ENCODE measurements at regions of chr18 and their contacts with region 1.

Region 1: GRCh38 chr18:22983175-22983574 is 50.0 kb downstream of the RBBP8 start:
- DNase-seq: no peak
- H3K4me3 Mint-ChIP-seq: no peak overlapping the region
- H3K27ac Mint-ChIP-seq: no peak overlapping the region
- H3K4me1 Mint-ChIP-seq: peaks cover 11% of the 10 kb centered on the region
- H3K27me3 Mint-ChIP-seq: no peaks in the 10 kb centered on the region

Region 2: DNA sequence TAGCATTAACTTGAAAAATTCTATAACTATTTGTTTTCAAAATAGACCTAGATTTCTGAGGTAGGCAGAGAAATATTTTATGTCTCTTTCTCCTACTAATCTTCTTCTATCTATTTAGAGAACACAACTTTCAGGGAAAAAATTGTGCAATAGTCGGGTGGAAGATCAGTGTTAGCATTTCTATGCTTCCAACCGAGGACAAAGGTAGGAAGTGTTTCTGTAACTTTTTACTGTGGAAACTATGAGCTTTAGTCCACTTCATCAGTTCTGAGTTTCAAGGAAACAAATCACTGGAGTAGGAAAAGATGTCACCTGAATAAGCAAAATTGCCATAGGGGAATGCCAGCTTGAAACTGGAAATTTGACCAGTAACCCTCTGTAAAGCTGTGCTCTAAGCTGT is 357.8 kb before region 1 on chr18:
- intact Hi-C with region 1: no loop called
- DNase-seq: no peak
- H3K4me3 Mint-ChIP-seq: no peak overlapping the region
- H3K27ac Mint-ChIP-seq: no peak overlapping the region
- H3K4me1 Mint-ChIP-seq: no peaks in the 10 kb centered on the region
- H3K27me3 Mint-ChIP-seq: no peaks in the 10 kb centered on the region

Region 3: GRCh38 chr18:22800551-22800951 is 182.6 kb before region 1 on chr18:
- intact Hi-C with region 1: loop called (anchors 1 kb)
- DNase-seq: no peak
- H3K4me3 Mint-ChIP-seq: no peak overlapping the region
- H3K27ac Mint-ChIP-seq: no peak overlapping the region
- H3K4me1 Mint-ChIP-seq: no peaks in the 10 kb centered on the region
- H3K27me3 Mint-ChIP-seq: peaks cover 17% of the 10 kb centered on the region

Region 4: GRCh38 chr18:22813648-22814328 is 169.4 kb before region 1 on chr18:
- intact Hi-C with region 1: loop called (anchors 2 kb)
- DNase-seq: no peak
- H3K4me3 Mint-ChIP-seq: no peak overlapping the region
- H3K27ac Mint-ChIP-seq: no peak overlapping the region
- H3K4me1 Mint-ChIP-seq: no peaks in the 10 kb centered on the region
- H3K27me3 Mint-ChIP-seq: peaks cover 26% of the 10 kb centered on the region

Region 5: DNA sequence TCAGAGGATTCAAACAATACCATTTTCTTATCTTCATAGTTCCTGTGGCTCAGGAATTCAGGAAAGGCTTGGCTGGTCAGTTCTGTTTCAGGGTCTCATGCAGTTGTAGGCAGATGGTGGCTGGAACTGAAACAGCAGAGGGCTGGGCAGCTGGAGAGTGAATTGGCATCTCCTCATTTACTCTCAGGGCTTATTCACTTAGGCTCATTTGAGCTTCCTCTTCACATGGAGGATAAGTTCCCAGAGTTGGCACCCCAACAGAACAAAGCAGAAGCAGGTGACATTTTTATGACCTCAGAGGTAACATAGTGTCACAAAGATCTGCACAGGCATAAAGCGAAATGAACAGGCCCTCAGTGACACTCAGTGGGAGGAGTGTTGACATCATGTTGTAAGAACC is 16.0 kb after region 1 on chr18:
- intact Hi-C with region 1: no loop called
- DNase-seq: no peak
- H3K4me3 Mint-ChIP-seq: no peak overlapping the region
- H3K27ac Mint-ChIP-seq: no peak overlapping the region
- H3K4me1 Mint-ChIP-seq: peaks cover 7% of the 10 kb centered on the region
- H3K27me3 Mint-ChIP-seq: no peaks in the 10 kb centered on the region

Region 6: DNA sequence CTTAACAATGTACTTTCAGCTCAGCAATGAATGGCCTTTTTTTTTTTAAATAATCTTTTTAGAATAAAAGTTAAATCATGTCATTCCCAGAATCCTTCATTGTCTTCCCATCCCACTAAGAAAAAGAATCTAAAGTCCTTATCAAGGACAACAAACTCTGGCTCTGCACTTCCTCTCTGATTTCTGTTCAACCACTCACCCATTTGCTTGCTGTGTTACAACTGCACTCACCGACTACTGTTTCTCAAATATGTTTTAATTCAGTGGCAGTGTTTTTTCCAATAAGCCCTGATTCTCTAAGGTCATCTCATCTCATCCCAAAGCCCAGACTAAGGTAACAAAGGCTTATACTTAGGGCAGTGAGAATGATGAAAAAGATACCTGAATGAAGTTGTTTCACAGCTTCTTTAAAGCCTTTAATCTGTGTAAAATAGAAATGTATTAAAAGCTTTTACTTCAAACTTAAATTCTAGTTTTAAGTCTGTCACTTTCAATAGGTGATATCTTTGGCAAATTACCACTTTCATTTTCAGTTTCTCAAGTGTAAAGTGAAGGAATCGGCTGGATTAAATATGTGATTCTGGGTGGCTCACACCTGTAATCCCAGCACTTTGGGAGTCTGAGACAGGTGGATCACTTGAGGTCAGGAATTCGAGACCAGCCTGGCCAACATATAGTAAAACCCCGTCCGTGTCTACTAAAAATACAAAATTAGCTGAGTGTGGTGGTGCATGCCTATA is 37.5 kb after region 1 on chr18:
- intact Hi-C with region 1: no loop called
- DNase-seq: no peak
- H3K4me3 Mint-ChIP-seq: peak overlapping the region; percentile 68
- H3K27ac Mint-ChIP-seq: no peak overlapping the region
- H3K4me1 Mint-ChIP-seq: peaks cover 10% of the 10 kb centered on the region
- H3K27me3 Mint-ChIP-seq: no peaks in the 10 kb centered on the region

Region 7: GRCh38 chr18:24103320-24104021 is 1120.3 kb after region 1 on chr18:
- intact Hi-C with region 1: no loop called
- DNase-seq: no peak
- H3K4me3 Mint-ChIP-seq: no peak overlapping the region
- H3K27ac Mint-ChIP-seq: no peak overlapping the region
- H3K4me1 Mint-ChIP-seq: no peaks in the 10 kb centered on the region
- H3K27me3 Mint-ChIP-seq: no peaks in the 10 kb centered on the region

Measured in activated T-helper 1 cell treated with anti-CD3 and anti-CD28 coated beads, Interleukin-12 subunit alpha, Interleukin-12 subunit beta, Interleukin-2, Interleukin-4 antibody, amounts not matched to agents 30 ng/mL and 10 ng/mL and 1 ng/mL, durations not matched to agents 14 hours and 24 hours and 36 hours (primary cell).